ENCODE measurements at regions of chr1 and their contacts with region 1.

Region 1: GRCh38 chr1:25204797-25205480 is 27.4 kb downstream of the SYF2 start:
- DNase-seq: peak; percentile 72
- H3K4me3 ChIP-seq: peak overlapping the region in 1 of 2 experiments; percentile 32; a peak in 1 of 4 replicates
- H3K27ac ChIP-seq: no peak overlapping the region
- H3K4me1 ChIP-seq: no peaks in the 10 kb centered on the region; a peak in 1 of 4 replicates
- H3K27me3 ChIP-seq: no peaks in the 10 kb centered on the region; the same call in 1 of the 2 replicates
- CTCF ChIP-seq: peak; percentile 85
- EP300 ChIP-seq: no peak
- RAD21 ChIP-seq: peak; percentile 75

Region 2: DNA sequence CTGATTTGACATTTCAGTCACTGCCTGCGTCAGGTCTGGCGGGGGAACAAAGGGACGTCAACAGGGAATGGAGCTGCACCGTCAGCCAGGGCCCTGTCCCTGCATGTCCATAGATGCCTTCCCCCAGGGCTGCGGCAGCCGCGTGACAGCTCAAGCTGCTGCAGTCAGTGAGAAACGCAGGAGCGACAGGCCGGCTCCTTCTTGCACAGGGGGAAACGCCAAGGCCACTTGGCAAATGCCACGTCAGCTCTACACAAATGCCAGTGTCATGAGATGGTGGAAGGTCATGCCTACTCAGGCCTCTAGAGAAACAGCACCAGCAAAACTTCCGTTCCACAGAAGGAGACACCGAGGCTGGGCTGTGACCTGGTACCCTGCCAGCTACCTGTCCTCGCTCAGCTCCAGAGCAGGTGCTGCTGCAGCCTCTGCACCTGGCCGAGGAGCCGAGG is 10.3 kb before region 1 on chr1:
- CTCF ChIA-PET with region 1: interaction called, 28 read pairs
- POLR2A ChIA-PET with region 1: no interaction called
- DNase-seq: no peak
- H3K4me3 ChIP-seq: no peak overlapping the region
- H3K27ac ChIP-seq: no peak overlapping the region
- H3K4me1 ChIP-seq: no peaks in the 10 kb centered on the region; a peak in 1 of 4 replicates
- H3K27me3 ChIP-seq: peaks cover 15% of the 10 kb centered on the region; the same call in 1 of the 2 replicates
- CTCF ChIP-seq: no peak
- EP300 ChIP-seq: no peak
- RAD21 ChIP-seq: no peak

Region 3: DNA sequence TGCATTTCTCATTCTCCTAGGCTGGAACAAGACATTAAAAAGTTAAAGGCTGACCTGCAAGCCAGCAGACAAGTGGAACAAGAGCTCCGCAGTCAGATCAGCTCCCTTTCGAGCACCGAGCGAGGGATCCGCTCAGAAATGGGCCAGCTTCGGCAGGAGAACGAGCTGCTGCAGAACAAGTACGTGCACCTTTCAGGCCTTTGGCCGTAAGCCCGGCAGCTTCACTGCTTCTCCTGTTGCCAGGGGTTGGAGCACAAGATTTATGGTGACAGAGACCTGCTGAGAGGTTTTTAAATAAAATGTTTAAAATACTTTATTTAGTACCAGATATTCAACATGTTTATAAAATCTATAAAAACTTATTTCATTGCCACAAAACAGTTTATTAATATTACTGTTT is 279.2 kb after region 1 on chr1:
- CTCF ChIA-PET with region 1: no interaction called
- POLR2A ChIA-PET with region 1: no interaction called
- DNase-seq: no peak
- H3K4me3 ChIP-seq: no peak overlapping the region
- H3K27ac ChIP-seq: no peak overlapping the region
- H3K4me1 ChIP-seq: peaks cover 0 to 8% of the 10 kb centered on the region in 2 experiments; a peak in 2 of 4 replicates
- H3K27me3 ChIP-seq: no peaks in the 10 kb centered on the region
- CTCF ChIP-seq: no peak
- EP300 ChIP-seq: no peak
- RAD21 ChIP-seq: no peak

Measured in SK-N-SH (cell line).